ENCODE measurements at regions of chr3 and their contacts with region 1.

Region 1: GRCh38 chr3:127598841-127599570 is 795 bp downstream of the MCM2 start:
- DNase-seq: no peak
- ATAC-seq: no peak
- H3K4me3 ChIP-seq: peak overlapping the region; percentile 61
- H3K4me3 Mint-ChIP-seq: peak overlapping the region; percentile 79
- H3K27ac ChIP-seq: peak overlapping the region in 1 of 2 donors; percentile 16
- H3K27ac Mint-ChIP-seq: peak overlapping the region; percentile 49
- H3K4me1 ChIP-seq: peaks cover 17% of the 10 kb centered on the region
- H3K4me1 Mint-ChIP-seq: peaks cover 16% of the 10 kb centered on the region
- H3K27me3 ChIP-seq: no peaks in the 10 kb centered on the region
- H3K27me3 Mint-ChIP-seq: no peaks in the 10 kb centered on the region
- CTCF ChIP-seq: no peak

Region 2: DNA sequence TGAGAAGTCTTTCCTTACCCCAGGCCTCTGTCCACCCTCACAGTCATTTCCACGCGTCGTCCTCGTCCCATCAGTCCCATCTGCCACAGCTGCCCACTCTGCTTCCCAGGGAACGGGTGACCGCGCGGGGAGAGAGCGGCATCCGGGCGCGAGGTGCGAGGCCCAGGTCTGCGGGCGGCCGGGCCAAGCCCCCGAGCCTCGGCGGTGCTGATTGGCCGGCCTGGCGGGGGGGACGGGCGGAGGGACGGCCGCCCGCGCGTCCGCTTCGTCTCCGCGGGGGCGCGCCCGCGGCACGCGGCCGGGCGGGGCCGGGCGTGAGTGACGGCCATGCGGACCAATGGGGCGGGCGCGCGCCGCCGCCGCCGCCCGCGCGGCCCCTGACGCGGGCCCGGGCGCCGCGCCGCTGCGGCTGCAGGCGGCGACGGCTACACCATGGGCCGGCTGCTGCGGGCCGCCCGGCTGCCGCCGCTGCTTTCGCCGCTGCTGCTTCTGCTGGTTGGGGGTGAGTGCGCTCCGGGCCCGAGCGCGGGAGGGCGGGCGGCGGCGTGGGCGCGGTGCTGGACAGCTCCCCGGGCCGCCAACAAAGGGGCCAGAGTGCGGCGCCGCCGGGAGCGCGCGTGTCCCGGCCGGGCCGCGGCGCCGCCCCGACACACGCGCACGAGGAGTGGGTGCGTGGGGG is 29.9 kb after region 1 on chr3 and contains the start of gene PODXL2:
- CTCF ChIA-PET with region 1: no interaction called
- POLR2A ChIA-PET with region 1: interaction called, 5 read pairs
- intact Hi-C with region 1: loop called in 1 of 2 experiments (anchors 1 kb)
- DNase-seq: peak in 9 of 14 experiments; percentile 12 to 77 (median 41)
- ATAC-seq: peak; percentile 40
- H3K4me3 ChIP-seq: peak within 1 kb of the TSS; percentile 65
- H3K4me3 Mint-ChIP-seq: peak within 1 kb of the TSS; percentile 90
- H3K27ac ChIP-seq: no peak within 1 kb of the TSS
- H3K27ac Mint-ChIP-seq: peak within 1 kb of the TSS; percentile 67
- H3K4me1 ChIP-seq: peaks cover 29% of the 10 kb centered on the region
- H3K4me1 Mint-ChIP-seq: peaks cover 44% of the 10 kb centered on the region
- H3K27me3 ChIP-seq: peaks cover 8 to 11% of the 10 kb centered on the region in 2 experiments
- H3K27me3 Mint-ChIP-seq: peaks cover 36% of the 10 kb centered on the region
- CTCF ChIP-seq: no peak
- total RNA-seq, gene PODXL2: 4.0 to 4.2 TPM

Region 3: DNA sequence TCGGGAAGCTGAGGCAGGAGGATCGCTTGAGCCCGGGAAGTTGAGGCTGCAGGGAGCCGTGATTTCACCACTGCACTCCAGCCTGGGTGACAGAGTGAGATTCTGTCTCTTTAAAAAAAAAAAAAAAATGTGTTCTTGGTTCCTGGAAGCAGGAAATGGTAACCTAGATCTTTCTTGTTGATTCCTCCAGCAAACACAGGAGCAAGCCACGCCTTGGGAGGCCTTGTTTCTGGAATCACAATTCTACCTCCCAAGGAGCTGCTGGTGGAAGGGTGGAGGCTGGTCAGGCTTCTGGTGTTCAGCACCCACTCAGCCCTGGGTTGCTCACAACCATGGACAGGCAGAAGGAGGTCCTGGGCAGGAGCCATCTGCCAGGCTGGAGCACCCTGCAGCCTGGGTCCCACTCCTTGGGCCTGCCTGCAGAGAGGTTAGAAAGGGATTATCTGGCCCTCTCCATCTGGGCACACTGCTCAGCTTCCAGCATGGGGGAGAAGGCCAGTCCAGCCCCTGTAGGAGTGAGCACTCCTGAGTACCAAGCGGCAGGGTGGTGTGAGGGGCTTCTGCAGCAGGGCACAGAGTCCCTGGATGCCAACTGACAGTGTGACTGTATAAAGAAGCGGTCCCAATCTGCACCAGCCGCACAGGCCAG is 139.3 kb after region 1 on chr3:
- CTCF ChIA-PET with region 1: no interaction called
- POLR2A ChIA-PET with region 1: no interaction called
- intact Hi-C with region 1: no loop called
- DNase-seq: no peak
- ATAC-seq: no peak
- H3K4me3 ChIP-seq: no peak overlapping the region
- H3K4me3 Mint-ChIP-seq: no peak overlapping the region
- H3K27ac ChIP-seq: no peak overlapping the region
- H3K27ac Mint-ChIP-seq: no peak overlapping the region
- H3K4me1 ChIP-seq: peaks cover 10% of the 10 kb centered on the region
- H3K4me1 Mint-ChIP-seq: no peaks in the 10 kb centered on the region
- H3K27me3 ChIP-seq: peaks cover 0 to 3% of the 10 kb centered on the region in 2 experiments
- H3K27me3 Mint-ChIP-seq: peaks cover 8% of the 10 kb centered on the region
- CTCF ChIP-seq: no peak